HCT116 (cell line): ENCODE measurements at regions of chr15 and their contacts with region 1.

Region 1: DNA sequence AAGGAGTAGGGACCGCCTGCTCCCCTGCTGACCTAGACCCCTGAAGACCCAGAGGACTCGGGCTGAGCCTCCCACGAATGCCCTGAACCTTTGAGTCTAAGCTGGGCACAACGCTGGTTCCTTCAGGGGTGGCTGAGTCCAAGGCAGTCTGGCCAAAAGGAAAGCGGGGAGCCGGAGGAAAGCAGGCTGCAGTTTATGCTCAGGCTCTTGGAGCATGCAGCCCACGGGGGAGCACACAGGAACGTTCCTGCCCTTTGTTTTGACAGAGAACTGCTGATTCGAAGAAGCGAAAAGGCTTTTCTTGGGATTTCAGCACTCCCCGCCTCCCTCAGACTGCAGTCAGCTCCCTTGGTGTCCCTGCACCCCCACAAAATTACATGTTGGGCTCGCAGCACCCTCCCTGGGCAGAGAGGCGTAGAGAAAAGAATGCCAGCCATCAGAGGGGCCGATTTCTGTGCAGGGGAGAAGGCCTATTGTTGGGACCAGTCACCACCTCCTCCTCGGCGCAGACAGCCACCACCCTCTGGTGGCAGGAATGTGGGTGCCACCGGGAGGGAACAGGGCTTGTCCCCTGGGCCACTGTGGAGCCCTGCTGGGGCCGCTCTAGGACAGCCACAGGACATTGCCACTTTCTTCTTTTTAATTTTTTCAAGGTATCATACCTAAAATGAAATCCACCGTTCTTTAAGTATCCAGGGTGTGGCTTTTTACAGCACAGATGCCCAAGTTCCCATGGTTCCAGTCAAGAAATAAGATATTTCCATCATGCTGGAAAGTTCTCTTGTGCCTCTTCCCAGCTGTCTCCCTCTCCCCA is 72.2 kb downstream of the SMAD6 start:
- DNase-seq: peak; percentile 72
- ATAC-seq: peak; percentile 97
- H3K4me3 ChIP-seq: no peak overlapping the region
- H3K27ac ChIP-seq: peak overlapping the region; percentile 44
- H3K4me1 ChIP-seq: peaks cover 68 to 76% of the 10 kb centered on the region in 2 experiments
- H3K27me3 ChIP-seq: no peaks in the 10 kb centered on the region
- CTCF ChIP-seq: peak; percentile 98 to 99 (median 99)
- POLR2A ChIP-seq: no peak
- RAD21 ChIP-seq: peak; percentile 100

Region 2: GRCh38 chr15:66603301-66604179 is 170.7 kb before region 1 on chr15:
- CTCF ChIA-PET with region 1: interaction called, 4 read pairs
- POLR2A ChIA-PET with region 1: no interaction called
- RAD21 ChIA-PET with region 1: no interaction called
- intact Hi-C with region 1: loop called (anchors 5 kb)
- DNase-seq: peak; percentile 43
- ATAC-seq: peak; percentile 99
- H3K4me3 ChIP-seq: no peak overlapping the region
- H3K27ac ChIP-seq: no peak overlapping the region
- H3K4me1 ChIP-seq: peaks cover 0 to 3% of the 10 kb centered on the region in 2 experiments; a peak in 1 of 4 replicates
- H3K27me3 ChIP-seq: no peaks in the 10 kb centered on the region; the same call in 1 of the 2 replicates
- CTCF ChIP-seq: peak; percentile 80 to 93 (median 84)
- POLR2A ChIP-seq: no peak
- RAD21 ChIP-seq: peak; percentile 94

Region 3: DNA sequence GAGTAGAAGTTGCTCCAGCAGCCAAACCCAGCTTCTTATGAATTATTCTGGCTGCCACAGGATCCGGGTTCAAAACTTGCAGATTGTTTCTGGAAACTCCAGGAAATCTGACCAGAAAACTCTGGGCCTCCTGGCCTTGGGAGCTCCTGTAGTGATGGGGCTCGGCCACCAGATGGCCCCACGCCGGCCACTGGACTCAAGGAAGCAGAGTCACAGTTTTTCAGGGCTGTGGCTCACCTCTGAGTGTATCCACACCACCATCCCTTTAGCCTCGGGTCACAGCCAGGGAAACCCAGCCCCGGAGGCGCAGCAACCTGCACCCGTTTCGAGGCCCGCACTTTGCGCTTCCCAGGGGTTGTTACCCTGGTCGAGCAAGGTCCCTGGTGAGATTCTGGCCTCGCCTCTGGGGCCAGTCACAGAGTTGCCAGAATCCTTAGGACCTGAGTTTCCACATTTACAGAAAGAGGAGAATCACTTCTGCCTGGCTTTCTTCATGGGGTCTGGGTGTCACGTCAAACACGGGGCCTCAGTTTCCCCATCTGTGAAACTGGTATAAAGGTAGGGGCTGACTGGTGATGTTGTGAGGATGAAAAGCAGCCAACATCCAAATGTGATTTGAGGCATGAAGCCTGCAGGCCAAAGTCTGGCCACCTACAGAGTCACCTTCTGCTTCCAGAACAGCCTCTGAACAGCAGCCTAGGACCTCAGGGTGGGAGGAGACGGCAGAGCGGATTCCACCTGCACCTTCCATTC is 154.9 kb before region 1 on chr15:
- CTCF ChIA-PET with region 1: interaction called, 5 read pairs
- POLR2A ChIA-PET with region 1: no interaction called
- RAD21 ChIA-PET with region 1: no interaction called
- intact Hi-C with region 1: loop called (anchors 1 kb)
- DNase-seq: peak; percentile 49
- ATAC-seq: peak; percentile 96
- H3K4me3 ChIP-seq: no peak overlapping the region
- H3K27ac ChIP-seq: no peak overlapping the region
- H3K4me1 ChIP-seq: peaks cover 6 to 25% of the 10 kb centered on the region in 2 experiments; a peak in 3 of 4 replicates
- H3K27me3 ChIP-seq: no peaks in the 10 kb centered on the region
- CTCF ChIP-seq: peak; percentile 88 to 95 (median 90)
- POLR2A ChIP-seq: no peak
- RAD21 ChIP-seq: peak; percentile 81

Region 4: GRCh38 chr15:66700802-66701421 is 73.3 kb before region 1 on chr15:
- CTCF ChIA-PET with region 1: interaction called, 5 read pairs
- POLR2A ChIA-PET with region 1: interaction called, 3 read pairs
- RAD21 ChIA-PET with region 1: no interaction called
- intact Hi-C with region 1: loop called (anchors 2 kb)
- DNase-seq: peak; percentile 87
- ATAC-seq: peak; percentile 70
- H3K4me3 ChIP-seq: peak overlapping the region; percentile 55 to 74
- H3K27ac ChIP-seq: peak overlapping the region; percentile 79
- H3K4me1 ChIP-seq: peaks cover 27 to 62% of the 10 kb centered on the region in 2 experiments
- H3K27me3 ChIP-seq: no peaks in the 10 kb centered on the region
- CTCF ChIP-seq: no peak
- POLR2A ChIP-seq: no peak
- RAD21 ChIP-seq: no peak

Region 5: DNA sequence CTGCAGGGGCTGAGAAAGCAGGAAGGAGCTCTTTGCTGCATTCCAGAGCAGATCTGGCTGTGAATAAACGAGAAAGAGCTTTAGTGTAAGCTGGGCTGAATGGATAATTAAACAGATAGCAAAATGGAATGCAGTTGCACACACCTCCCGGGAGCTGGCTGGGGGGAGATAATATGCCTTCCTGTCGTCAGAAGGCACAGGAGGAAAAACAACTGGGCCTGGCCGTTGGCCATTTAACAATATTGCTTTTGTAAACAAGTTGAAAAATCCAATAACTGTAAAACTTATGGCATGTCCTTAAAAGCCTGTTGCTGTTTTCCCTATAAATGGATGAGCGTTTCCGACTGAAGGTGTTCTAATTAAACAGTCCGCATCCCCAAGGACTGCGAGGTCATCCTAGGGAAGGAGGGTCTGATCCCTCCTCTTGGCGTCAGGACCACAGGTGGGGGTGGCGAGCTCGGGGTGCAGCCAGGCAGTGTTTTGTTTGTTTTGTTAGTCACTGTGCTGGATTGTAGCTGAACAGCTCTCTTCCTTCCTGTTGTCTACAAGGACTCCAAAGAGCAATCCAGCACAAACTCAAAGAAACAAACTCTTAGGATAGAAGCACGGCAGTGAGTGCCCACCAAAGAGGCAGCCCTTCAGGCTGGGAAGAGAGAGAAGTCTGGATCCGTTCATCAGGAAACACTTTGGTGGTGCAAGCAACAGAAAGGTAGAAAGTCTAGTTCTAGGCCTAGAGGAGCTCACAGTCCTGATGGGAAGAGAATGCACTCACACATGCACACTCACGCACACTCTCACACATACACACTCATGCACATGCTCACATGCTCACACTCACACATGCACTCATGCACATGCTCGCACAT is 157.8 kb after region 1 on chr15:
- CTCF ChIA-PET with region 1: no interaction called
- POLR2A ChIA-PET with region 1: no interaction called
- RAD21 ChIA-PET with region 1: no interaction called
- intact Hi-C with region 1: no loop called
- DNase-seq: peak; percentile 52
- ATAC-seq: peak; percentile 88
- H3K4me3 ChIP-seq: peak overlapping the region; percentile 6 to 47; a peak in 3 of 4 replicates
- H3K27ac ChIP-seq: peak overlapping the region; percentile 88
- H3K4me1 ChIP-seq: peaks cover 32 to 36% of the 10 kb centered on the region in 2 experiments
- H3K27me3 ChIP-seq: no peaks in the 10 kb centered on the region
- CTCF ChIP-seq: no peak
- POLR2A ChIP-seq: no peak
- RAD21 ChIP-seq: no peak